PC-9 (cell line): ENCODE measurements at regions of chr1 and their contacts with region 1.

Region 1: DNA sequence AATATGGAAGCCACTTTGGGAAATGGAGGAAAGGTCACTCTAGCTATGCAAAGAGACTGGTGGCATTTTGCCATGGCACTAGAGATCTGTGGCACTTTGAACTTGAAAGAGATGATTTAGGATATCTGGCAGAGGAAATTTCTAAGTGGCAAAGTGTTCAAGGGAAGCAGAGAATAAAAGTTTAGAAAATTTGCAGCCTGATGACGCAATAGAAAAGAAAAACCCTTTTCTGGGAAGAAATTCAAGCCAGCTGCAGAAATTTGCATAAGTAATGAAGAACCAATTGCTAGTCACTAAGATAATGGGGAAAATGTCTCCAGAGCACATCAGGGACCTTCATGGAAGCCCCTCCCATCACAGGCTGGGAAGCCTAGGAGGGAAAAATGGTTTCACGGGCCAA is 191.1 kb upstream of the B3GALT2 start:
- DNase-seq: no peak
- H3K4me3 ChIP-seq: no peak overlapping the region
- H3K27ac ChIP-seq: no peak overlapping the region
- H3K4me1 ChIP-seq: no peaks in the 10 kb centered on the region
- H3K27me3 ChIP-seq: no peaks in the 10 kb centered on the region
- CTCF ChIP-seq: no peak

Region 2: DNA sequence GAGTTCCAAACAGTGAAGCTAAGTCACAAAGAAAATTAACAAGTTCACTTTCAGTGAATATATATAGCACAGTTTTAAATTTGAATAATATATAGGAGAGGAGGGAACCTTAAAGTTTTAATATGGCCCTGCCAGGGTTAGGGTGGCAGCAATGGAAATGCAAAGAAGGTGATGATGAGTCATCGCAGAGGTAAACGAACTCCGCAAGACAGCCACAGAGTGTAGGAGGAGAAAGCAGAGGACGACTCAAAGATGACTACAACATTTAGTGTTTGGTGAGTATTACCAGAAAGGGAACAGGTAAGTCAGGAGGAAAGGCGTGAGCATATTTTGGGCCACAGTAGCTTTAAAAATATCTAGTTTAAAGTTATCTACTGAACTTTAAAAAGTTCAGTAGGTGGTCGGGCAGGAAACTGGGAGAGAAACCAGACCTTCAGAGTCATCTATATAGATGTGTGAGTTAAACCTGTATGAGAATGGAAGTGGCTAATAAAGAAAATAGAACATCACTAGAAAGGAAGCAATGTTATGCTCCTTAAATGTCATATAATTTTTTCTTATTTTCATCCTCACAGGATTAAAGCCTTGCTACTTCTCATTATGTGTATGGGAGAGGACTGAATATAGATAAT is 394.0 kb before region 1 on chr1:
- CTCF ChIA-PET with region 1: no interaction called
- POLR2A ChIA-PET with region 1: no interaction called
- intact Hi-C with region 1: loop called (anchors 5 kb)
- DNase-seq: no peak
- H3K4me3 ChIP-seq: no peak overlapping the region
- H3K27ac ChIP-seq: no peak overlapping the region
- H3K4me1 ChIP-seq: no peaks in the 10 kb centered on the region
- H3K27me3 ChIP-seq: no peaks in the 10 kb centered on the region
- CTCF ChIP-seq: no peak

Region 3: GRCh38 chr1:193674292-193674944 is 296.9 kb after region 1 on chr1:
- CTCF ChIA-PET with region 1: no interaction called
- POLR2A ChIA-PET with region 1: no interaction called
- intact Hi-C with region 1: no loop called
- DNase-seq: no peak
- H3K4me3 ChIP-seq: no peak overlapping the region
- H3K27ac ChIP-seq: no peak overlapping the region
- H3K4me1 ChIP-seq: no peaks in the 10 kb centered on the region
- H3K27me3 ChIP-seq: no peaks in the 10 kb centered on the region
- CTCF ChIP-seq: no peak